Activated CD8-positive, alpha-beta T cell treated with anti-CD3 and anti-CD28 coated beads for 36 hours (primary cell): ENCODE measurements at regions of chr11 and their contacts with region 1.

Region 1: DNA sequence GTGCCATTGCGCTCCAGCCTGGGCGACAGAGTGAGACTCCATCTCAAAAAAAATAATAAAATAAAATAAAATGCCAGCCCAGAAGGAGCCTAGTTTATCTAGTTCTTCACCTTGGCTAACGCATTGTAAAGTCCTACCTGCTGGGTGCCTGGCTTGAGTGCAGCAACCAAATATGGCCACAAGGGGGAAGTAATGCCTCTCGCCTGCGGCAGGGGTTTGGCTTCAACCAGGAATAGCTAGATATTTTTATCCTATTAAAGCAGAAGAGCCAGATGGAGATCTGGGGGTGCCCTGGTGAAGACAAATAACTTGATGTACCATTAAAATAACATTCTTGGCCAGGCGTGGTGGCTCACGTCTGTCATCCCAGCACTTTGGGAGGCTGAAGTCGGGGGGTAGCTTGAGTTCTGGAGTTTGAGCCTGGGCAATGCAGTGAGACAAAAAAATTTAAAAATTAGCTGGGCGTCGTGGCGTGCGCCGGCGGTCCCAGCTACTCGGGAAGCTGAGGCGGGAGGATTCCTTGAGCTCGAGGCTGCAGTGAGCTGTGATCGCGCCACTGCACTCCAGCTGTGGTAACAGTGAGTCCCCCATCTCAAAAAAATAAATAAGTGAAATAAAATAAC is 20.6 kb upstream of the PLEKHB1 start:
- DNase-seq: peak; percentile 78
- ATAC-seq: peak; percentile 94
- H3K4me3 Mint-ChIP-seq: no peak overlapping the region
- H3K27ac Mint-ChIP-seq: no peak overlapping the region
- H3K4me1 Mint-ChIP-seq: no peaks in the 10 kb centered on the region
- H3K27me3 Mint-ChIP-seq: peaks cover 8% of the 10 kb centered on the region
- CTCF ChIP-seq: peak; percentile 91

Region 2: DNA sequence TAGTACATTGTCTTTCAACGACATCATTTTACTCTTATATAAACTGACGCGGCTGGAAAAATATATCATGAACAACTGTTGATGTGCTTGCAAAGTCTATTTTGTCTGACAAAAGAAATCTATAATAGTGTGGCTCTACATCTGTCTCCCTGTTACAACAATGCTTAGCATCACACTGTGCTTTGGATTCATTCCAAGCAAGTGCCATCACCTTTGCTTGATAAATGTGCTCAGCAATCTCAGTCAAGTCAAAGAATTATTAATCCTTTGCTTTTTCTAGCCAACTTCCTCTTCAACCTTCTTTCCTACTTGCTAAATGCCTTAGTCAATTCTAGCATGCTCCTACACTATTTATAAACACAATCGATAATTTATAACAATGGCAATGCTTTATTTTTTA is 624.2 kb before region 1 on chr11:
- CTCF ChIA-PET with region 1: no interaction called
- POLR2A ChIA-PET with region 1: no interaction called
- intact Hi-C with region 1: no loop called
- DNase-seq: no peak
- ATAC-seq: no peak
- H3K4me3 Mint-ChIP-seq: no peak overlapping the region
- H3K27ac Mint-ChIP-seq: no peak overlapping the region
- H3K4me1 Mint-ChIP-seq: peaks cover 18% of the 10 kb centered on the region
- H3K27me3 Mint-ChIP-seq: no peaks in the 10 kb centered on the region
- CTCF ChIP-seq: no peak

Region 3: DNA sequence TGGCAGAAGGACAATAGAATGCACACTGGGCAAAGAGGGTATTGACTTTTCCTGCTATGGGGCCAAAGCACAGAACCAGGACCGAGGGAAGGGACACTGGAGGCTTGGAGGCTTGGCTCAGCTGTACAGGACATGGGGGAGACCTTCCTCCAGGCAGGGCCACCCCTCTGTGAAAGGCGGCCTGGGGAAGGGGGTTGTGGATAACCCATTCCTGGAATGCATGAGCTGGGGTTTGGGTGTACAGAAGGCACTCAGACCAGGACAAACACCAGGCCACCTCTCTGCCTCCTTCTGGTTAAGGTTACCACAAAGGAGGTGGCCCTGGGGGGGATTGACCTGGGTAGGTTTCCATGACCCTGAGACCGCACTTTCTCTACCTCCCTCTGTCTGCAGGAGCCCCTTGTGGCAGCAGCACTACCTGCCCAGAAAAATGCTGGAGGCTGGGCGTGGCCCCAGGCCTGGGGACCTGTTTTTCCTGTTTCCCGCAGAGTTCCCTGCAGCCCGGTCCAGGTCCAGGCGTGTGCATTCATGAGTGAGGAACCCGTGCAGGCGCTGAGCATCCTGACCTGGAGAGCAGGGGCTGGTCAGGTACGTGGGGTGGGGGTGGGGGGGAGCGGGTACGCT is 398.1 kb before region 1 on chr11:
- CTCF ChIA-PET with region 1: no interaction called
- POLR2A ChIA-PET with region 1: no interaction called
- intact Hi-C with region 1: no loop called
- DNase-seq: no peak
- ATAC-seq: no peak
- H3K4me3 Mint-ChIP-seq: no peak overlapping the region
- H3K27ac Mint-ChIP-seq: no peak overlapping the region
- H3K4me1 Mint-ChIP-seq: no peaks in the 10 kb centered on the region
- H3K27me3 Mint-ChIP-seq: no peaks in the 10 kb centered on the region
- CTCF ChIP-seq: no peak

Region 4: GRCh38 chr11:73453562-73453961 is 172.2 kb before region 1 on chr11:
- CTCF ChIA-PET with region 1: interaction called, 11 read pairs
- POLR2A ChIA-PET with region 1: no interaction called
- intact Hi-C with region 1: no loop called
- DNase-seq: no peak
- ATAC-seq: no peak
- H3K4me3 Mint-ChIP-seq: no peak overlapping the region
- H3K27ac Mint-ChIP-seq: no peak overlapping the region
- H3K4me1 Mint-ChIP-seq: no peaks in the 10 kb centered on the region
- H3K27me3 Mint-ChIP-seq: no peaks in the 10 kb centered on the region
- CTCF ChIP-seq: no peak

Region 5: GRCh38 chr11:73478738-73479347 is 147.0 kb before region 1 on chr11:
- CTCF ChIA-PET with region 1: interaction called, 10 read pairs
- POLR2A ChIA-PET with region 1: no interaction called
- intact Hi-C with region 1: no loop called
- DNase-seq: peak; percentile 2
- ATAC-seq: no peak
- H3K4me3 Mint-ChIP-seq: no peak overlapping the region
- H3K27ac Mint-ChIP-seq: no peak overlapping the region
- H3K4me1 Mint-ChIP-seq: no peaks in the 10 kb centered on the region
- H3K27me3 Mint-ChIP-seq: no peaks in the 10 kb centered on the region
- CTCF ChIP-seq: peak; percentile 50

Region 6: GRCh38 chr11:73509188-73509587 is 116.6 kb before region 1 on chr11:
- CTCF ChIA-PET with region 1: no interaction called
- POLR2A ChIA-PET with region 1: no interaction called
- intact Hi-C with region 1: no loop called
- DNase-seq: no peak
- ATAC-seq: no peak
- H3K4me3 Mint-ChIP-seq: no peak overlapping the region
- H3K27ac Mint-ChIP-seq: no peak overlapping the region
- H3K4me1 Mint-ChIP-seq: peaks cover 9% of the 10 kb centered on the region
- H3K27me3 Mint-ChIP-seq: no peaks in the 10 kb centered on the region
- CTCF ChIP-seq: no peak

Region 7: DNA sequence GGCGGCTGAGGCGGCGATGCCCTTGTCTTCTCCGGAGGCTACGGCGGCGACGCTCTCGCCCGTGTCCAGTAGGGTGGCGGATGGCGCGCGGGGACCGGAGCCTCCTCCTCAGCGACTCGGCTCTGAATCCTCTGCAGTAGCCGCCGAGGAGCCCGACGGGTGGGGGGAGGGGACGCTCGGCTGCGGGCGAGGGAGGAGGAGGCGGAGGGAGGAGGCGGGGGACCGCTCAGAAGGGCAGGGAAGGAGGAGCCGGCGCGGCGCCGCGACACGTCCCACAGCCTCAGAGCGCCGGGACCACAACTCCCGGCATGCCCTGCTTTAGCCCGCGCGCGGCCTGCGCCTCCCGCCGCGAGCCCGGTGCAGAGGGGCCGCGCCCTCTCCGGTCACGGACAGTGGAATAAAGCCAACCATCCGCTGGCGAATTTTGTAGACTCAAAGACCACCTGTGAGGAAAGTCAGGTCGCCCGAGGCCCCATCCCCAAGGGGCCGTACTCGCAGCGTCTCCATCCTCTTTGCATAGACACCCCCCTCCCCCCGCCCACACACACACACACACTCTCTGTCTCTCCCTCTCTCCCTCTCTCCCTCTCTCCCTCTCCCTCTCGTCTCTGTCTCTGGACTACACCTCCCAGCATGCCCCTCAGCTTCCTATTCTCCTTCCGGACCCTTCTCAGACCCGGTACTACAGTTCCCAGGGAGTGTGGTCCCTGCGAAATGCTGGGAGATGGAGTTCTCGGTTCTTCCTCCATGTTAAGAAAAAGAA is 27.7 kb before region 1 on chr11 and contains the start of gene FAM168A:
- CTCF ChIA-PET with region 1: interaction called, 15 read pairs
- POLR2A ChIA-PET with region 1: no interaction called
- intact Hi-C with region 1: no loop called
- DNase-seq: peak; percentile 95
- ATAC-seq: peak; percentile 93
- H3K4me3 Mint-ChIP-seq: peak within 1 kb of the TSS; percentile 97
- H3K27ac Mint-ChIP-seq: peak within 1 kb of the TSS; percentile 93
- H3K4me1 Mint-ChIP-seq: peaks cover 37% of the 10 kb centered on the region
- H3K27me3 Mint-ChIP-seq: no peaks in the 10 kb centered on the region
- CTCF ChIP-seq: peak; percentile 15
- total RNA-seq, gene FAM168A: 13.0 to 14.2 TPM

Region 8: DNA sequence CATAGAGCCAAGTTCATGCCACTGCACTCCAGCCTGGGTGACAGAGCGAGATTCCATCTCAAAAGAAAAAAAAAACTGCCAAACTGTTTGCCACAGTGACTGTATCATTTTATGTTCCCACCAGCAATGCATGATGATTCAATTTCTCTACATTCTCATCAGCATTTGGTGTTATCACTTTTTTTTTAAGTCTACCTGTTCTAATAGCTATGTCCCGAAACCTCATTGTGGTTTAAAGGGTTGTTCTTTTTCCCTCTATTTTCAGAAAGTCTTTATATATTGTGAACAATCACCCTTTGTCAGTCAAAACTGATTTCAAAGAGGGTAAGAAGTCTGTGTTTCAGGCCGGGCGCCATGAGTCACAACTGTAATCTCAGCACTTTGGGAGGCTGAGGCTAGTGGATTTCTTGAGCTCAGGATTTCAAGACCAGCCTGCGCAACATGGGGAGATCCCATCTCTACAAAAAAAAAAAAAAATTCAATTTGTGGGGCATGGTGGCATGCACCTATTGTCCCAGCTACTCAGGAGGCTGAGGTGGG is 13.1 kb before region 1 on chr11:
- CTCF ChIA-PET with region 1: interaction called, 10 read pairs
- POLR2A ChIA-PET with region 1: no interaction called
- intact Hi-C with region 1: no loop called
- DNase-seq: no peak
- ATAC-seq: no peak
- H3K4me3 Mint-ChIP-seq: no peak overlapping the region
- H3K27ac Mint-ChIP-seq: no peak overlapping the region
- H3K4me1 Mint-ChIP-seq: no peaks in the 10 kb centered on the region
- H3K27me3 Mint-ChIP-seq: peaks cover 2% of the 10 kb centered on the region
- CTCF ChIP-seq: no peak

Region 9: DNA sequence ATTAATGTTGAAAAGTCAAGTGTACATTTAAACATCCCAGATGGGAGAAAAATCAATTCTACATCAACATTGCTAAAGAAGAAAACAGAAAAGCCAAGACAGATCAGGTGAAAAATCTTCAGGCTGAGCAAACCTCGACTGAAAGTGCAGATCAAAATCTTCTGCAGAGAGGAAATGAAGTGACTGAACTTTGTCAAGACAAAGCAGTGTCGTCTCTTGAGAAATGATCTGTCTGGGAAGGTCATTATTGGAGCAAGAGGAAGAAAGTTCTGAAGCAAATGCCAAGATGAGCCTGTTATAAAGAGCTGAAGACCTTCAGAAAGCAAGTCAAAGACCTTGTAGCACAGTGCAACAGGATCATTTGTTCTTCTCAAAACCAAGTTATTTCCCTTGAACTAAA is 14.8 kb after region 1 on chr11:
- CTCF ChIA-PET with region 1: interaction called, 44 read pairs
- POLR2A ChIA-PET with region 1: interaction called, 3 read pairs
- intact Hi-C with region 1: no loop called
- DNase-seq: no peak
- ATAC-seq: no peak
- H3K4me3 Mint-ChIP-seq: no peak overlapping the region
- H3K27ac Mint-ChIP-seq: no peak overlapping the region
- H3K4me1 Mint-ChIP-seq: peaks cover 6% of the 10 kb centered on the region
- H3K27me3 Mint-ChIP-seq: no peaks in the 10 kb centered on the region
- CTCF ChIP-seq: no peak

Region 10: GRCh38 chr11:73647459-73648100 is 21.8 kb after region 1 on chr11:
- CTCF ChIA-PET with region 1: interaction called, 44 read pairs
- POLR2A ChIA-PET with region 1: interaction called, 3 read pairs
- intact Hi-C with region 1: no loop called
- DNase-seq: peak; percentile 97
- ATAC-seq: peak; percentile 100
- H3K4me3 Mint-ChIP-seq: peak overlapping the region; percentile 80
- H3K27ac Mint-ChIP-seq: peak overlapping the region; percentile 68
- H3K4me1 Mint-ChIP-seq: peaks cover 12% of the 10 kb centered on the region
- H3K27me3 Mint-ChIP-seq: no peaks in the 10 kb centered on the region
- CTCF ChIP-seq: no peak